Mucosa of descending colon (tissue), 3 donors: ENCODE measurements at regions of chr12 and their contacts with region 1.

Region 1: DNA sequence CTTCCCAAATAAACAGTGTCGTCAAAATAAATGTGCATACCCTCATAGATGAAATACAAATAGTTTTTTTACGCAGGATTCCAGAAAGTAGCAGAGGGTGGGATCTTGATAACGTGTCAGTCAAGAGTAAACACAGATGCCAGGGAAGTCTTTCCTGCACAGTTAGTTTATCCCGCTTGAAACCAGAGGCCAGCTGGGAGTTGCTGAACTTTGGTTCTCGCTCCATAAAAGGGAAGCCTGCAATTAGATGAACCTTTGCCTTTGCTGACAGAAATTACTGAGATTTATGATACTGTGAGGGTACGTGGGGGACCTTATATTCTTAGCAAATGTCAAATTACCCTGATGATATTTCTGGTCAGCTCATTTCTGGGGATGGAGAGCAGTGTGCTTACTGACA is 18.9 kb downstream of the FAR2 start:
- DNase-seq: peak in 1 of 3 donors; percentile 74
- ATAC-seq: peak; percentile 84
- H3K4me3 ChIP-seq: no peak overlapping the region
- H3K4me1 ChIP-seq: peaks cover 63% of the 10 kb centered on the region
- CTCF ChIP-seq: no peak

Region 2: DNA sequence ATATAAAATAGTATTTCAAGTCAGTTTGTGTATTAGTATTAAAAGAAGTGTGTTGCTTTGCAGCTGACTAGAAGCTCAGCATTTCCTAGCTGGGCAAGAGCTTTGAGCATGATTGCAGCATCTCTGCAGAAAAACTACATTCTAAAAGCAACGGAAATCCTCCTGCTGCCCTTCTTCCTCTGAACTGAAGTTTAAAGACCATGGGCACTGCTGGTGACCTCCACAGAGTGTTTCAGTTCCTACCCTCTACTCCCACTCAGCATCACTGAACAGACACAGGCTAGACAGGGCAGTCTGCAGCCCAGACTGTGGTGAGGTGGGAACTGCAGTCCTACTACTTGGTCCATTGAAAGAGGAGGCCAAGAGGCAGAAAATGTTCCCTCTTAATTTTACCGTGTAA is 40.1 kb after region 1 on chr12:
- intact Hi-C with region 1: loop called in 1 of 2 experiments (anchors 2 kb)
- DNase-seq: no peak
- ATAC-seq: peak; percentile 18
- H3K4me3 ChIP-seq: no peak overlapping the region
- H3K4me1 ChIP-seq: peaks cover 18% of the 10 kb centered on the region
- CTCF ChIP-seq: no peak